B cell (primary cell): ENCODE measurements at regions of chr17 and their contacts with region 1.

Region 1: GRCh38 chr17:5598457-5598856 is 14.1 kb upstream of the NLRP1 start:
- DNase-seq: no peak
- ATAC-seq: no peak
- H3K4me3 ChIP-seq: no peak overlapping the region
- H3K4me3 Mint-ChIP-seq: no peak overlapping the region
- H3K27ac ChIP-seq: no peak overlapping the region
- H3K27ac Mint-ChIP-seq: no peak overlapping the region
- H3K4me1 ChIP-seq: no peaks in the 10 kb centered on the region
- H3K4me1 Mint-ChIP-seq: no peaks in the 10 kb centered on the region
- H3K27me3 ChIP-seq: peaks cover 0 to 21% (median 8%) of the 10 kb centered on the region in 4 experiments
- H3K27me3 Mint-ChIP-seq: peaks cover 65% of the 10 kb centered on the region
- CTCF ChIP-seq: no peak

Region 2: GRCh38 chr17:5706577-5707216 is 108.2 kb after region 1 on chr17:
- CTCF ChIA-PET with region 1: interaction called, 33 read pairs
- POLR2A ChIA-PET with region 1: no interaction called
- intact Hi-C with region 1: no loop called
- DNase-seq: peak; percentile 66
- ATAC-seq: peak; percentile 41
- H3K4me3 ChIP-seq: no peak overlapping the region
- H3K4me3 Mint-ChIP-seq: no peak overlapping the region
- H3K27ac ChIP-seq: no peak overlapping the region
- H3K27ac Mint-ChIP-seq: no peak overlapping the region
- H3K4me1 ChIP-seq: no peaks in the 10 kb centered on the region
- H3K4me1 Mint-ChIP-seq: no peaks in the 10 kb centered on the region
- H3K27me3 ChIP-seq: peaks cover 0 to 16% (median 0%) of the 10 kb centered on the region in 4 experiments
- H3K27me3 Mint-ChIP-seq: peaks cover 29% of the 10 kb centered on the region
- CTCF ChIP-seq: peak; percentile 70

Region 3: DNA sequence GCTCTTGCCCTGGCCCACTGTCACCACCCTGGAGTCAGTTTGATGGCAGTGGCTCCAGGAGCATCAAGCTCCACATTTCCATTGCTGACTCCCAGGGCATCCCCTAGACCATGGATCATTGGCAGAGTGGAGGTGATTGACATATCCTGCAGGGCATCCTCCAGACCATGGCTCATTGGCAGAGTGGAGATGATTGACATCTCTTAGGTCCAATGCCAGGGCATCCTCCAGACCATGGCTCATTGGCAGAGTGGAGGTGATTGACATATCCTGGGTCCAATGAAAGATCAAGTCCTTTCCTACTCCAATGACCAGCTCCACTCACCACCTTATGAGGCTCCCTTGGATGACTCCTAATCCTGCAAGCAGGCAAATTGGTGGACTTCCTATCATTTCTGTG is 160.2 kb after region 1 on chr17:
- CTCF ChIA-PET with region 1: no interaction called
- POLR2A ChIA-PET with region 1: no interaction called
- intact Hi-C with region 1: no loop called
- DNase-seq: no peak
- ATAC-seq: no peak
- H3K4me3 ChIP-seq: no peak overlapping the region
- H3K4me3 Mint-ChIP-seq: no peak overlapping the region
- H3K27ac ChIP-seq: no peak overlapping the region
- H3K27ac Mint-ChIP-seq: no peak overlapping the region
- H3K4me1 ChIP-seq: no peaks in the 10 kb centered on the region
- H3K4me1 Mint-ChIP-seq: no peaks in the 10 kb centered on the region
- H3K27me3 ChIP-seq: peaks cover 0 to 7% (median 0%) of the 10 kb centered on the region in 4 experiments
- H3K27me3 Mint-ChIP-seq: peaks cover 28% of the 10 kb centered on the region
- CTCF ChIP-seq: no peak